Head of caudate nucleus (tissue), 42 donors: ENCODE measurements at regions of chr22 and their contacts with region 1.

Region 1: GRCh38 chr22:46006379-46007002 is 29.5 kb upstream of the WNT7B start:
- DNase-seq: peak; percentile 89 to 98 (median 95)

Region 2: DNA sequence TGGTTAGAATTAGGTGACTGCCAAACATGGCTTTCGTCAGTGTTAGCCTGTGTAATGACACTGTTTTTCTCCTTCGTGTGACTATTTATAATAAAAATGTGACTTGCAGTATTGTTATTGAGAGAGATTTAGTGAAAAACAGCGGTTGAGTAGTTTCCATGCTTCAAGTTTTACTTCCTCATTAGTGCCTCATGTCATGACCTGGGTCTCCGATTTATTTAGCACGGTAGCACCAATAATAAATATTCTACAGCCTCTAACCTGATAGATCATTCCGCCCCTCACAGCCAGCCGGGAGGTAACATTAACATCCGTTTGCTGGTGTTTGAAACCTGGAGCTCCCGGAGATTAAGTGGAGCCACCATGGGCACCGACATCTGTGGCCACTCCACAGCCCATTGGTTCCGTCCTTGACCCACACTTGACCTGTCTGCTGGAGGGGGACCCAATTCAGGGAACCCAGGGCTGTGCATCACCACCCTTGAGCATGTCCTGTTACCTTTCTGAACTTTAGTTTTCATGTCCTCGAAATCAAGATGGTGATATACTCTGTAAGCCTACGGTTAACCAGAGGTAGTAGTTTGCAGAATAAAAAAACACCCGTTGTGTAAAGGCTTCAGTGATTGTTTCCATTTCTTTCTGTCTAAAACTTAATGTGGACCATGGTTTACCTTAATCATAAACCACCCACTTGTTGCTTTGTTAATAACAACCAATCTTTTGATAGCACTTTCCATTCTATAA is 230.8 kb before region 1 on chr22:
- intact Hi-C with region 1: no loop called
- DNase-seq: no peak

Region 3: DNA sequence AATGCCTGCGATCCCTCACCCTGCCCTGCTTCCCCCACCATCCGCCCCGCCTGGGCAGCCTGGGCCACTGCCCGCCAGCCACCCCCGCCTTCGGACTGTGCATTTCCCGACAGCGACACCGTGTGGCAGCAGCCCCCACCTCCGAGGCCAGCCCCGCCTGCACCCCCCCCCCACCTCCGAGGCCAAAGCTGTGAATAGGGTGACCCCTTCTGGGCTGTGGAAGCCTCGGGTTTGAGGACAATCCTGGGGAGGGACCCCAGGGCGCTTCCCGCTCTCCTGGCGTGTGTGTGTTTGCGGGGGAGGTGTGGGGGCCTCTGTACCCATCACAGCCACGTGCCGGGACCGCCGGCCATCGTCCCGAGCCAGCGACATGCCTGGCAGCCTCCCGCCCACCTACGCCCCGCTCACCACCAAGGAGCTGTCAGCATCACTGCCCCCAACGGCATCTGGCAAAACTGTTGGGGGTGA is 110.0 kb after region 1 on chr22:
- intact Hi-C with region 1: loop called (anchors 2 kb)
- DNase-seq: peak; percentile 86 to 98 (median 94)